ENCODE measurements at regions of chr4 and their contacts with region 1.

Region 1: GRCh38 chr4:112765317-112765975 is 128.5 kb downstream of the LARP7 start:
- DNase-seq: peak; percentile 31
- H3K4me3 ChIP-seq: no peak overlapping the region
- H3K27ac ChIP-seq: no peak overlapping the region
- H3K4me1 ChIP-seq: no peaks in the 10 kb centered on the region
- H3K27me3 ChIP-seq: no peaks in the 10 kb centered on the region
- CTCF ChIP-seq: peak; percentile 40 to 41
- POLR2A ChIP-seq: no peak

Region 2: GRCh38 chr4:112214390-112215264 is 550.8 kb before region 1 on chr4:
- CTCF ChIA-PET with region 1: no interaction called
- POLR2A ChIA-PET with region 1: no interaction called
- dilution Hi-C with region 1: no loop called
- intact Hi-C with region 1: loop called (anchors 5 kb)
- DNase-seq: peak; percentile 34
- H3K4me3 ChIP-seq: no peak overlapping the region
- H3K27ac ChIP-seq: no peak overlapping the region
- H3K4me1 ChIP-seq: no peaks in the 10 kb centered on the region
- H3K27me3 ChIP-seq: no peaks in the 10 kb centered on the region
- CTCF ChIP-seq: peak in 1 of 2 donors; percentile 27
- POLR2A ChIP-seq: no peak

Region 3: DNA sequence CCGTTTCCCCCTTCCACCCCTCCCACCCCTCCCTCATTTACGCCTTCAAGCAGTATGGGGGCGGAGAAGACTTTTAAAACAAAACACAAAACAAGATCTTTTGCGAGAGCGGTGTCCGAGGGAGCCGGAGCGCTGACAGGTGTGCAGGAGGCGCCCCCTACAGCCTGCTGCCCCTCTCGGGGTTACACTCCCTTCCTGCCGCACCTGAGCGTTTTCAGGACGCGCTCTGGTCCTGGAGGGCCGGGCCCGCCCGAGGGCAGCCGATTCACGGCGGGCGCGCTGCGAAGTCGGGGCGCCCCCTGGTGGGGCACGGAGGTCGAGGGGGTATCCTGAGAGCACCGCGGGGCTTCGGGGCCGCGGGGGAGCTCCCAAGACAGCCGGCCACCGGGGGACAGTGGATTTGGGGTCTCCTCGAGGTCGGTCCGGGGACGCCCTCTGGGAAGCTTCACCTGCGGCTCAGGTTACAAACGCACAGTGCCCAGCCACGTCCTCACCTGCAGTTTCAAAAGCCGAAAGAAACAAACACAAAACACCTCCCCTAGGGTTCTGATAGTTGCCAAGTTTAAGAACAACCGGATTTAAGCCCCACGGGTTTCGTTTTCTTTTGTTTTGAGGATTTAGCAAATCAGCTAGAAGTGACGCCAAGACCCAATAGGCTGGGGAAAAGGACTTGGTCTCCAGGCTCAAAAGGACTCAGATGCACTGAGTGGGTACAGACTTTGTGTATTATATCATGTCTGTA is 241.5 kb before region 1 on chr4:
- CTCF ChIA-PET with region 1: interaction called, 4 read pairs
- POLR2A ChIA-PET with region 1: no interaction called
- dilution Hi-C with region 1: no loop called
- intact Hi-C with region 1: loop called (anchors 5 kb)
- DNase-seq: no peak
- H3K4me3 ChIP-seq: peak overlapping the region; percentile 1 to 56 (median 18)
- H3K27ac ChIP-seq: no peak overlapping the region
- H3K4me1 ChIP-seq: peaks cover 10% of the 10 kb centered on the region
- H3K27me3 ChIP-seq: peaks cover 62 to 82% of the 10 kb centered on the region in 2 experiments
- CTCF ChIP-seq: peak; percentile 72 to 79
- POLR2A ChIP-seq: no peak

Region 4: DNA sequence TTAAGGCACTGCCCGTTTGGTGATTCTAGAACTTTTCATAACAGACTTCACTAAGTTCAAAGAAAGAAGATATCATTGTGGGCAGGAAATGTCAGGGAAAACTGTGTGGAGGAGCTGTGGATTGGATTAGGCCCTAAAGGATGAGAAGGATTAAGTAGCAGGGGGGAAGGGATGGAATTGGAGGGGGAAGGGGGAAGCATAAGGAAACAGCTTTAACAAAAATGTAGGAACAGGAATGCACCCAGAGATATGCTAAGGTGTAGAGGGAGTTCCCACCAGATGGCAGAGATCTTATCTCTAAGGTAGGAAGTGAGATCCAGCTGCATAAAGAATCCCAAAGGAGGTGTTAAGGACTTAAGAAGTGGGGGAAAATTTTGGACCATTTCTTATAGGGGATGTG is 14.0 kb before region 1 on chr4:
- CTCF ChIA-PET with region 1: interaction called, 22 read pairs
- POLR2A ChIA-PET with region 1: no interaction called
- dilution Hi-C with region 1: no loop called
- intact Hi-C with region 1: no loop called
- DNase-seq: no peak
- H3K4me3 ChIP-seq: no peak overlapping the region
- H3K27ac ChIP-seq: no peak overlapping the region
- H3K4me1 ChIP-seq: no peaks in the 10 kb centered on the region
- H3K27me3 ChIP-seq: no peaks in the 10 kb centered on the region
- CTCF ChIP-seq: no peak
- POLR2A ChIP-seq: no peak

Region 5: GRCh38 chr4:112938461-112939058 is 173.1 kb after region 1 on chr4:
- CTCF ChIA-PET with region 1: interaction called, 37 read pairs
- POLR2A ChIA-PET with region 1: no interaction called
- dilution Hi-C with region 1: no loop called
- intact Hi-C with region 1: loop called (anchors 1 kb)
- DNase-seq: peak; percentile 40
- H3K4me3 ChIP-seq: no peak overlapping the region
- H3K27ac ChIP-seq: no peak overlapping the region
- H3K4me1 ChIP-seq: no peaks in the 10 kb centered on the region
- H3K27me3 ChIP-seq: no peaks in the 10 kb centered on the region
- CTCF ChIP-seq: peak; percentile 43 to 45
- POLR2A ChIP-seq: no peak

Measured in endothelial cell of umbilical vein (primary cell).